CD4-positive, alpha-beta memory T cell (primary cell): ENCODE measurements at regions of chr20 and their contacts with region 1.

Region 1: GRCh38 chr20:1325173-1326030 is 3.5 kb downstream of the SDCBP2 start:
- DNase-seq: peak; percentile 98 to 99 (median 98)
- H3K4me3 ChIP-seq: peak overlapping the region; percentile 58 to 85
- H3K4me3 Mint-ChIP-seq: no peak overlapping the region
- H3K27ac ChIP-seq: peak overlapping the region; percentile 98
- H3K27ac Mint-ChIP-seq: no peak overlapping the region
- H3K4me1 ChIP-seq: peaks cover 42% of the 10 kb centered on the region
- H3K4me1 Mint-ChIP-seq: peaks cover 14 to 24% (median 19%) of the 10 kb centered on the region in 4 donors
- H3K27me3 ChIP-seq: no peaks in the 10 kb centered on the region
- H3K27me3 Mint-ChIP-seq: no peaks in the 10 kb centered on the region

Region 2: DNA sequence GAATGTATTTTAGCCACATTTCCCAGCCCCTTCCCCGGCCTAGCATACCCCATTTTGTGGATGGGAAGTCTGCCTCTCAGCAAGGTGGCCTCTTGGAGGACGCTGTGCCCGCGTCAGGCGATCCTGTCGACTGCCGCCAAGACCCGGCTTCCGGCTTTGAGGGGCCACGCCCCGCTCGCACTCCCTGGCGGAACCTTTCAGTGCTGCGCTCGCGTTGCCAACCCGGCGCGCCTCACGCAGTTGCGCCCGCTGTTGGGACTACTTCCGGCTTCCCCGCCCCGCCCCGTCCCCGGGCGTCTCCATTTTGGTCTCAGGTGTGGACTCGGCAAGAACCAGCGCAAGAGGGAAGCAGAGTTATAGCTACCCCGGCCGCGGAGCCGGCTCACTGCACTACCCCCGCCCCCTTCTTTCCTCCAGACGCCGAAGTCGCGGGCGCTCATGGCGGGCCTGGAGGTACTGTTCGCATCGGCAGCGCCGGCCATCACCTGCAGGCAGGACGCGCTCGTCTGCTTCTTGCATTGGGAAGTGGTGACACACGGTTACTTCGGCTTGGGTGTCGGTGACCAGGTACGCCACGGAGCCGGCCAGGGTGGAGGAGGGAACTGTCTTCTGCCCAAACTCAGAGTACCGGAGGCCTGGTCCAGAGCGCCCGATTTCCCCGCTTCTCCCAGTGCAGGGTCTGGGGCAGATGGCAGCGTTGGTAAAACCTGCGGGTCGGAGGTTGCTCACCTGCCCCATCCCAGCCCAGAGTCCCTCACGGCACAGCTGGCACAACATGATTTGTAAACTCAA is 206.9 kb before region 1 on chr20 and contains the start of gene PSMF1:
- CTCF ChIA-PET with region 1: no interaction called
- POLR2A ChIA-PET with region 1: no interaction called
- intact Hi-C with region 1: loop called (anchors 1 kb)
- DNase-seq: peak; percentile 95 to 98 (median 96)
- H3K4me3 ChIP-seq: peak within 1 kb of the TSS; percentile 85 to 99
- H3K4me3 Mint-ChIP-seq: peak within 1 kb of the TSS; percentile 91 to 97 (median 95)
- H3K27ac ChIP-seq: peak within 1 kb of the TSS; percentile 78
- H3K27ac Mint-ChIP-seq: peak within 1 kb of the TSS; percentile 91 to 97 (median 95)
- H3K4me1 ChIP-seq: peaks cover 52% of the 10 kb centered on the region
- H3K4me1 Mint-ChIP-seq: peaks cover 47 to 70% (median 58%) of the 10 kb centered on the region in 4 donors
- H3K27me3 ChIP-seq: no peaks in the 10 kb centered on the region
- H3K27me3 Mint-ChIP-seq: no peaks in the 10 kb centered on the region
- total RNA-seq, gene PSMF1: 118 to 123 TPM

Region 3: DNA sequence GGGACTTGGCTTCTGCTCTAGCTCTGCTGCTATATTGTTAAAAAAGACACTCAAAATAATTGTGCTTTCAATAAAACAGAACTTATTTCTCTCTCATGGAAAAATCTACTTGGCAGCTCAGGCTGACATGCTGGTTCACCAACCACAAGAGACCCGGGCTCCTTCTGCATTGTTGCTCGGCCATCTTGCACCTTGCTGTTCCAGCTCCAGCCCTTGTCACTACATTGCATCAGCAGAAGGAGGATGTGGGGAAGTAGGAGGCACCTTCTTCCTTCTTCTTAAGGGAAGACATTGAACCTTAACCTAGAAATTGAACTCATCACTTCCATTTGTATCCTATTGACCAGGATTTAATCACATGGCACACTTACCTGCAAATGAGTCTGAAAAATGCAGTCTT is 128.8 kb before region 1 on chr20:
- CTCF ChIA-PET with region 1: no interaction called
- POLR2A ChIA-PET with region 1: no interaction called
- intact Hi-C with region 1: no loop called
- DNase-seq: no peak
- H3K4me3 ChIP-seq: no peak overlapping the region
- H3K4me3 Mint-ChIP-seq: no peak overlapping the region
- H3K27ac ChIP-seq: no peak overlapping the region
- H3K27ac Mint-ChIP-seq: no peak overlapping the region
- H3K4me1 ChIP-seq: no peaks in the 10 kb centered on the region
- H3K4me1 Mint-ChIP-seq: peaks cover 0 to 6% (median 5%) of the 10 kb centered on the region in 4 donors
- H3K27me3 ChIP-seq: no peaks in the 10 kb centered on the region
- H3K27me3 Mint-ChIP-seq: no peaks in the 10 kb centered on the region

Region 4: GRCh38 chr20:1313236-1313964 is 12.0 kb before region 1 on chr20:
- CTCF ChIA-PET with region 1: interaction called, 12 read pairs
- POLR2A ChIA-PET with region 1: interaction called, 3 read pairs
- intact Hi-C with region 1: no loop called
- DNase-seq: peak; percentile 54 to 59 (median 54)
- H3K4me3 ChIP-seq: no peak overlapping the region
- H3K4me3 Mint-ChIP-seq: no peak overlapping the region
- H3K27ac ChIP-seq: no peak overlapping the region
- H3K27ac Mint-ChIP-seq: peak overlapping the region in 1 of 7 donors; percentile 54
- H3K4me1 ChIP-seq: peaks cover 8% of the 10 kb centered on the region
- H3K4me1 Mint-ChIP-seq: peaks cover 4 to 10% (median 7%) of the 10 kb centered on the region in 4 donors
- H3K27me3 ChIP-seq: no peaks in the 10 kb centered on the region
- H3K27me3 Mint-ChIP-seq: no peaks in the 10 kb centered on the region

Region 5: GRCh38 chr20:1336699-1337367 is 11.4 kb after region 1 on chr20:
- CTCF ChIA-PET with region 1: no interaction called
- POLR2A ChIA-PET with region 1: no interaction called
- intact Hi-C with region 1: no loop called
- DNase-seq: no peak
- H3K4me3 ChIP-seq: no peak overlapping the region
- H3K4me3 Mint-ChIP-seq: no peak overlapping the region
- H3K27ac ChIP-seq: no peak overlapping the region
- H3K27ac Mint-ChIP-seq: peak overlapping the region in 6 of 7 donors; percentile 35 to 80 (median 52)
- H3K4me1 ChIP-seq: no peaks in the 10 kb centered on the region
- H3K4me1 Mint-ChIP-seq: peaks cover 10 to 28% (median 17%) of the 10 kb centered on the region in 4 donors
- H3K27me3 ChIP-seq: no peaks in the 10 kb centered on the region
- H3K27me3 Mint-ChIP-seq: no peaks in the 10 kb centered on the region

Region 6: GRCh38 chr20:1466211-1467081 is 141.0 kb after region 1 on chr20 and contains the start of gene NSFL1C:
- CTCF ChIA-PET with region 1: interaction called, 4 read pairs
- POLR2A ChIA-PET with region 1: interaction called, 10 read pairs
- intact Hi-C with region 1: loop called (anchors 1 kb)
- DNase-seq: peak; percentile 95 to 99 (median 97)
- H3K4me3 ChIP-seq: peak within 1 kb of the TSS; percentile 53 to 65
- H3K4me3 Mint-ChIP-seq: peak within 1 kb of the TSS; percentile 78 to 93 (median 88)
- H3K27ac ChIP-seq: peak within 1 kb of the TSS; percentile 89
- H3K27ac Mint-ChIP-seq: peak within 1 kb of the TSS; percentile 66 to 95 (median 91)
- H3K4me1 ChIP-seq: peaks cover 41% of the 10 kb centered on the region
- H3K4me1 Mint-ChIP-seq: peaks cover 34 to 49% (median 40%) of the 10 kb centered on the region in 4 donors
- H3K27me3 ChIP-seq: no peaks in the 10 kb centered on the region
- H3K27me3 Mint-ChIP-seq: peaks cover 1 to 5% of the 10 kb centered on the region in 2 donors
- total RNA-seq, gene NSFL1C: 57.5 to 65.8 TPM

Region 7: GRCh38 chr20:1576641-1577040 is 251.2 kb after region 1 on chr20:
- CTCF ChIA-PET with region 1: no interaction called
- POLR2A ChIA-PET with region 1: no interaction called
- intact Hi-C with region 1: no loop called
- DNase-seq: no peak
- H3K4me3 ChIP-seq: no peak overlapping the region
- H3K4me3 Mint-ChIP-seq: no peak overlapping the region
- H3K27ac ChIP-seq: no peak overlapping the region
- H3K27ac Mint-ChIP-seq: peak overlapping the region in 1 of 7 donors; percentile 7
- H3K4me1 ChIP-seq: no peaks in the 10 kb centered on the region
- H3K4me1 Mint-ChIP-seq: no peaks in the 10 kb centered on the region
- H3K27me3 ChIP-seq: no peaks in the 10 kb centered on the region
- H3K27me3 Mint-ChIP-seq: no peaks in the 10 kb centered on the region

Region 8: GRCh38 chr20:1827974-1828785 is 502.8 kb after region 1 on chr20:
- CTCF ChIA-PET with region 1: no interaction called
- POLR2A ChIA-PET with region 1: no interaction called
- intact Hi-C with region 1: no loop called
- DNase-seq: no peak
- H3K4me3 ChIP-seq: no peak overlapping the region
- H3K4me3 Mint-ChIP-seq: no peak overlapping the region
- H3K27ac ChIP-seq: no peak overlapping the region
- H3K27ac Mint-ChIP-seq: no peak overlapping the region
- H3K4me1 ChIP-seq: no peaks in the 10 kb centered on the region
- H3K4me1 Mint-ChIP-seq: no peaks in the 10 kb centered on the region
- H3K27me3 ChIP-seq: no peaks in the 10 kb centered on the region
- H3K27me3 Mint-ChIP-seq: peaks cover 10 to 28% of the 10 kb centered on the region in 2 donors

Region 9: DNA sequence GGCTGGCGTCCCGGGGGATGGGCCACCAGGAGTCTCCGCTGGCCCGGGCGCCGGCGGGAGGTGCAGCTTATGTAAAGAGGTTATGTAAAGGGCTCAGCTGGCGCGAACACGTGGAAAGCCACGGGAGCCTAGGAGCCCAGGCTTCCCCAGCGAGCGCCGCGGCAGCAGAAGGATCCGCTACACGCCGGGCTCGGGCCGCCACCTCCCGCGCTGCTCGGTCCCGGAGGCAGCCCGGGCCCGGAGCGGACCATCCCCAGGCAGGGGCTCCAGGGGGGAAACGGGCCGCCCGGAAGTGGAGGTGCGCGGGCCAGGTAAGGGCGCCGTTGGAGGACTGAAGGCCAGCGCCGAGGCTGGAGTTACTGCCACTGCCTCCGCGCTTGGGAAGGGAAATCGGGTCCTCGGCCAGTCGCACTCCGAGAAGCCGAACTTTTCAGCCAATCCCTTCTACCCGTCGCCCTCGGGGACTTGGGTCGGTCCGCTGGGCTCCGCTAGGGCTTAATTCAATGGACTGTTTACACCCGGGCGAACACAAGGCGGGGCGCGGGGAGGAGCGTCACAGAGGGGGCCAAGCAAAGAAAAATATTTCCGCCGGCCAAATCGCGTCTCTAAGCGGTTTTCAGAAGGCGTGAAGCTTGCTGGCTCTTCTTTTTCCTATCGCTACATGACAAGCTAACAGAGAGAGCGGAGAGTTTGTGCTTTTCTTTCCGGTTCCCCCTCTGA is 776.6 kb after region 1 on chr20:
- CTCF ChIA-PET with region 1: no interaction called
- POLR2A ChIA-PET with region 1: no interaction called
- intact Hi-C with region 1: loop called (anchors 2 kb)
- DNase-seq: peak; percentile 92 to 95 (median 94)
- H3K4me3 ChIP-seq: peak overlapping the region; percentile 33 to 98
- H3K4me3 Mint-ChIP-seq: peak overlapping the region; percentile 92 to 98 (median 96)
- H3K27ac ChIP-seq: peak overlapping the region; percentile 97
- H3K27ac Mint-ChIP-seq: peak overlapping the region; percentile 100
- H3K4me1 ChIP-seq: peaks cover 45% of the 10 kb centered on the region
- H3K4me1 Mint-ChIP-seq: peaks cover 30 to 59% (median 42%) of the 10 kb centered on the region in 4 donors
- H3K27me3 ChIP-seq: no peaks in the 10 kb centered on the region
- H3K27me3 Mint-ChIP-seq: peaks cover 0 to 2% of the 10 kb centered on the region in 2 donors